ENCODE measurements at regions of chr5 and their contacts with region 1.

Region 1: GRCh38 chr5:169149317-169149716 is 151.6 kb downstream of the SLIT3 start:
- DNase-seq: no peak
- H3K4me3 ChIP-seq: no peak overlapping the region
- H3K27ac ChIP-seq: no peak overlapping the region
- H3K4me1 ChIP-seq: peaks cover 0 to 10% (median 9%) of the 10 kb centered on the region in 4 donors
- H3K27me3 ChIP-seq: no peaks in the 10 kb centered on the region
- CTCF ChIP-seq: no peak
- EP300 ChIP-seq: no peak
- POLR2A ChIP-seq: no peak

Region 2: DNA sequence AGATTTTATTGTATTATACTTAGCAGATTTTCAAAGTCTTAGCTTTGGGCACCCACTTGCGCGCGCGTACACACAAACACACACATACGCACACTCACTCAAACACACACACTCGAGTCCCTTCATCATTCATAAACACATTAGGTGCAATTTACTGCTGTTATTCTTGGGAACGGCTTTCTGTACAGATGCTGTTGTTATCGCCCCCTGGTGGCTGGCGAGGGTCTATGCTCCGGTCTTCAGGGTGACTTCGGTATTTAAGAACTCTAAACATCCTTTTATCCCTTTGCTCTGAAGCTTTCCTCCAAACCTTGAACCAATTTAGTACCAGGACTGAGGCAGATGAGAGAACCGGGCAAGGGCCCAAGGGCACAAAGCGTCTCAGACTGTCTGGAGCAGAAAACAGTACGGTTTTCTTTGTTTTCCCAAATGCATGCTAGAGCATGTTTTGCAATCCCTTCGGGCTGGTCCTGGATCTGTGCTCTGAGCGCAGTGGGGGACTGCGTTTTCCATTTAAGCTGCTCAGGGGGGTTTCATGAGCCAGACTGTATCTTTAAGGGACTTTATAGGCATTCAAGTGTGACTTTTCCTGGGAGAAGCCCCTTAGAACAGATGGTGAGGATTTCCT is 153.3 kb after region 1 on chr5:
- in situ Hi-C with region 1: no loop called
- intact Hi-C with region 1: loop called (anchors 10 kb)
- DNase-seq: peak; percentile 71
- H3K4me3 ChIP-seq: no peak overlapping the region
- H3K27ac ChIP-seq: peak overlapping the region in 1 of 4 donors; percentile 79
- H3K4me1 ChIP-seq: peaks cover 0 to 15% (median 5%) of the 10 kb centered on the region in 4 donors
- H3K27me3 ChIP-seq: peaks cover 54% of the 10 kb centered on the region
- CTCF ChIP-seq: peak; percentile 78 to 91 (median 87)
- EP300 ChIP-seq: no peak
- POLR2A ChIP-seq: no peak